Right ventricle myocardium inferior (tissue), 1 donor: ENCODE measurements at regions of chr1 and their contacts with region 1.

Region 1: DNA sequence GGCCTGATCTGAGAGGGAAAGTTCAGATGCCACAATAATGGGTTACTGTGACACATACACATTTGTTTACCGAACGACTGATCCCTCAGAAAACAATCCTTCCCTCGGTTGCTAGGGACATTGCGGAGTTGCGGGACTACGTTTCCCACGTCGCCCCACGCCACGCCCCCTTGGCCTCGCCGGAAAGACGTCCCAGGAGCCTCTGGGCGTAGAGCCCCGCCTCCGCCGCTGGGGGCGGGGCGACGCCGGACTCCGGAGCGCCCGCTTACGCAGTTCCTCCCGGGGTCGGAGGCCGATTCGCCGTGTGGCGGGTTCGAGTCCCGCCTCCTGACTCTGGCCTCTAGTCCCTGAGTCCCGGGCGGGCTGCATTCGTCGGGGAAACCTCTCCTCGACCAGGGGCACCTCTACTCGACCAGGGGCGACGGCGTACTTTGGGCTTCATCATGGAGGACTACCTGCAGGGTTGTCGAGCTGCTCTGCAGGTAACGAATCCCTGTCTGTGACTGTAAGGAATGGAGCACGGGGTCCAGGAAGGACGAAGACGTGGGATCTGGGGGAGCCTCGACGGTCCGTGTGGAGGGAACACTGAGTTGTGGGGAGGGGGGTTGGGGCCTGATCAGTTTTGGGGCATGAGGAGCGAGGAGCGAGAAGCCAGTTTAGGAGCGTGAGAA is at the start of gene PRUNE1:
- DNase-seq: peak; percentile 98
- ATAC-seq: peak; percentile 93
- total RNA-seq, gene PRUNE1: 42.1 TPM

Region 2: GRCh38 chr1:150507905-150508854 is 500.1 kb before region 1 on chr1 and contains the start of gene ECM1:
- intact Hi-C with region 1: no loop called
- DNase-seq: no peak
- ATAC-seq: peak; percentile 80
- total RNA-seq, gene ECM1: 24.1 TPM

Region 3: DNA sequence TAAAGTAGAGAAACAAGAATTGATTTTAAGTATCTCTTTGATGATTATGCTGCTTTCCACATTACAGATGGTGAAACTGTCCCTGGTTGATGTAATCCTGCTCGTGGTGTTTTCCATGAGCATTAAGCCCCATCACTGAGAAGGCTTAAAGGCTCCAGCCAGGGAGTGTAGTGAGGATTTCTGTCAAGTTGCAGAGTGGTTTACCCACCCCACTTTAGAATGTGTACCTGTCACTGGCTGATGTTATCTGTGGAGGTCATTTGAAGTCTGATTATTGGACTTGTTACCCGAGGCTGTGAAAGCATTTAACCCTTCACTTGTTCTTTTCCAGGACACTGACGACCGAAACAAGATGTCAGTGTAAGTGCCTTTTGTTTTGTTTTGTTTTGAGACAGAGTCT is 46.5 kb before region 1 on chr1:
- intact Hi-C with region 1: no loop called
- DNase-seq: no peak
- ATAC-seq: no peak

Region 4: DNA sequence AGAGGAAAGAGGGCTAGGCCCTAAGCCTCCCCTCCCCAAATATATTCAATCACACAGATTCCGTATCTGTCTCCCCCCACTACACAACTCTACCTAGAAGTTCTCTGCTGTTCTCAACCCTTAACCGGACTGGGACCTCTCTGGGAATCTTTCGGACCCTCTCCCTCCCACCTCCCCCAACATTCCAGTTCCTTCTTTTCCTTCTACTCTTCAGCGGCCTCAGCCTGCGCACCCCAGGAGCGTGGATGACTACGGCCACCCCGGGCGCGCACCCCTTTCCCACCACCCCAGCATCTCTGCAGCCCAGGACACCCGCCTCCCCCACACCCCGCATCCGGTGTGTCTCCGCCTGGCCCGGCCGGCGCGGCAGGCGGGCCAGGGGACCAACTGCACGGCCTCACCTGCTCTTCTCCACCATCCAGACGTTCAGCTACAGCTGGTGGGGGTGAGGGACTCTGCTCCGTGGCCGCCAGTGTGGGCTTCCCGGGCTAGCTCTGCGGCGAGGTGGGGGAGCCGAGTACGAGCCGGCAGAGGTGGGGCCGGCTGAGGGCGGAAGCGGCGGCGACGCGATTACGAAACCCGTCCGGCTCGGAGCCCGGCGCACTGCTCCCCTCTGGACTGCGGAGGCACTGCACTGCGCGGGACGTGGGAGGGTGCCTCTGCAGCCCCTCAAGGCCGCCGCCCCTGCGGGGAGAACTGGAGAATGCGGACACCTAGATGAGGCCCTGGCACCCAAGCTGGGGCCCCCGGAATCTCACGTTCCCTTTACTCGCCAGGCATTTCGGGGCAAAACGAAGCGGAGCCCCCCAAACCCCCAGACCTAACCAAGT is 51.0 kb after region 1 on chr1 and contains the start of gene CDC42SE1:
- intact Hi-C with region 1: loop called (anchors 2 kb)
- DNase-seq: peak; percentile 95
- ATAC-seq: peak; percentile 95
- total RNA-seq, gene CDC42SE1: 28.0 TPM